ENCODE measurements at regions of chr19 and their contacts with region 1.

Region 1: GRCh38 chr19:4342615-4343369 is 570 bp upstream of the MPND start:
- DNase-seq: peak; percentile 96
- ATAC-seq: peak; percentile 93
- H3K4me3 Mint-ChIP-seq: peak overlapping the region; percentile 85
- H3K27ac Mint-ChIP-seq: peak overlapping the region; percentile 98
- H3K4me1 Mint-ChIP-seq: peaks cover 15% of the 10 kb centered on the region
- H3K27me3 Mint-ChIP-seq: peaks cover 12% of the 10 kb centered on the region
- CTCF ChIP-seq: no peak

Region 2: GRCh38 chr19:4246767-4247593 is 95.8 kb before region 1 on chr19 and contains the start of gene YJU2:
- CTCF ChIA-PET with region 1: interaction called, 6 read pairs
- POLR2A ChIA-PET with region 1: interaction called, 10 read pairs
- DNase-seq: peak; percentile 99
- ATAC-seq: peak; percentile 98
- H3K4me3 Mint-ChIP-seq: peak within 1 kb of the TSS; percentile 94
- H3K27ac Mint-ChIP-seq: peak within 1 kb of the TSS; percentile 100
- H3K4me1 Mint-ChIP-seq: 0 out of 2 replicates have a peak, but pooled peaks cover 3% of the 10 kb centered on the region
- H3K27me3 Mint-ChIP-seq: peaks cover 11% of the 10 kb centered on the region
- CTCF ChIP-seq: no peak; the same call in 1 of the 2 replicates
- total RNA-seq, gene YJU2: 24.3 to 26.5 TPM (median 25.2 TPM) in 3 replicates

Region 3: DNA sequence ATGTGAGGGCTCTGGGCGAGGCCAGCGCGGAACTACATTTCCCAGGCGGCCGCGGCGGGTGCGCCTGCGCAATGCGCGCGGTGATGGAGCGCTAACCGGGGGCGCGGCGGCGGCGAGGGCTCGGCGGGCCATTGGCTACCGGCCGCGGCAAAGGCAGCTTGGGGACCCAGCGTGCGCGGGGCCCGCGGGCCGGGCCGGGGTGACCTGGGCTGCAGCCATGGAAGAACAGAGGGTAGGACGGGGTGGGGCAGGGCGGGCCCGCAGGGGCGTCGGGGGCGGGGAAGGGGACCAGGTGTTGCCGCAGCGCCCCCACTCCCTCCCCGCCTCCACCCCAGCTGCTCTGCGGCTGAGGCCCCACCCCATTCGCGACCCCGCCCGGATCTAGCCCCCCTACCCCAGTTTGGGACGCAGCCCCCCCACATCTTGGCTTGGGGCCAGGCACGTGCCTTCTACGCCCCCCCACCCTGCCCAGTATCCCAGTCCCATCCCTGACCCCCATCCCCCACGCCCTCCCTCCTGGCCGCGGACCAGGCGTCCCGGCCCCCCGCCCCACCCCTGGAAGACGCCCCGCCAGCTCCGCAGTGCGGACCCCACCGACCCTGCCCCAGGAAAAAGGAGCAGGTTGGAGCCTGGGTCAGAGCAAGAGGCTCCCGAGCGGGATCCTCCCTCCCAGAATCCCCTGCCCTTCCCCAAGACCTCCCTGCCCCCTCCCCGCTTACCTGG is 38.1 kb before region 1 on chr19 and contains the start of gene FSD1:
- CTCF ChIA-PET with region 1: interaction called, 10 read pairs
- POLR2A ChIA-PET with region 1: interaction called, 7 read pairs
- DNase-seq: peak; percentile 87
- ATAC-seq: peak; percentile 93
- H3K4me3 Mint-ChIP-seq: peak within 1 kb of the TSS; percentile 67
- H3K27ac Mint-ChIP-seq: no peak within 1 kb of the TSS
- H3K4me1 Mint-ChIP-seq: peaks cover 17% of the 10 kb centered on the region
- H3K27me3 Mint-ChIP-seq: peaks cover 3% of the 10 kb centered on the region
- CTCF ChIP-seq: no peak
- total RNA-seq, gene FSD1: 61.3 to 69.2 TPM (median 65.7 TPM) in 3 replicates

Region 4: DNA sequence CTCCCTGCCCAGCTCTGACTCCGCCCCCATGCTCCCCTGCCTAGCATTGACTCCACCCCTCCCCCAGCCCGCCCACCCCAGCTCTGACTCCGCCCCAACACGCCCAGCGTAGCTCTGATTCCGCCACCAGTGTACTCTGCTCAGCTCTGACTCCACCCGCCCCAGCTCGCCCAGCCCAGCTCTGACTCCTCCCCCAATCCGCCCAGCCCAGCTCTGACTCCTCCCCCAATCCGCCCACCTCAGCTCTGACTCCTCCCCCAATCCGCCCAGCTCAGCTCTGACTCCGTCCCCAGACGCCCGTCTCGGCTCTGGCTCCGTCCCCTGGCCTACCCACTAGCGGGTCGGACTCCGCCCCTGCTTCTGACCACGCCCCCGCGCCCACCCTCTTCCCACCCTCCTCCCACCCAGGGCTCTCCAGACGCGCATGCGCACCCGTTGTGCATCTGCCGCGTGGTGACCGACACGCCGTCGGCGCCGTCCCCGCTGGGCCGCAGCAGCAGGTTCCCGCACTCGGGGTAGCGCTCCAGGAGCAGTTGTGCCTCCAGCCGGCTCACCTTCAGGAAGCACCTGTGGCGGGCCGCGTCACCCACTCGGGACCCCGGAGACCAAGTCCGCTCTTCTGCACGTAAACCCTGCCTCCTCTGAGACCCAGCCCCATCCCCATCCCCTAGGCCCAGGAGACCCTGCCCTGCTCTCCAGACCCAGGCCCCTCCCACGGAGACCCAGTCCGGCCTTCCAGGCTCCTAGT is 14.4 kb before region 1 on chr19:
- CTCF ChIA-PET with region 1: interaction called, 21 read pairs
- POLR2A ChIA-PET with region 1: interaction called, 17 read pairs
- DNase-seq: peak; percentile 98
- ATAC-seq: peak; percentile 68
- H3K4me3 Mint-ChIP-seq: peak overlapping the region; percentile 76
- H3K27ac Mint-ChIP-seq: no peak overlapping the region
- H3K4me1 Mint-ChIP-seq: peaks cover 12% of the 10 kb centered on the region
- H3K27me3 Mint-ChIP-seq: peaks cover 3% of the 10 kb centered on the region
- CTCF ChIP-seq: no peak

Region 5: GRCh38 chr19:4362861-4363510 is 20.2 kb after region 1 on chr19:
- CTCF ChIA-PET with region 1: interaction called, 17 read pairs
- POLR2A ChIA-PET with region 1: interaction called, 4 read pairs
- DNase-seq: peak; percentile 44
- ATAC-seq: peak; percentile 43
- H3K4me3 Mint-ChIP-seq: no peak overlapping the region
- H3K27ac Mint-ChIP-seq: no peak overlapping the region
- H3K4me1 Mint-ChIP-seq: peaks cover 10% of the 10 kb centered on the region
- H3K27me3 Mint-ChIP-seq: no peaks in the 10 kb centered on the region
- CTCF ChIP-seq: no peak

Region 6: DNA sequence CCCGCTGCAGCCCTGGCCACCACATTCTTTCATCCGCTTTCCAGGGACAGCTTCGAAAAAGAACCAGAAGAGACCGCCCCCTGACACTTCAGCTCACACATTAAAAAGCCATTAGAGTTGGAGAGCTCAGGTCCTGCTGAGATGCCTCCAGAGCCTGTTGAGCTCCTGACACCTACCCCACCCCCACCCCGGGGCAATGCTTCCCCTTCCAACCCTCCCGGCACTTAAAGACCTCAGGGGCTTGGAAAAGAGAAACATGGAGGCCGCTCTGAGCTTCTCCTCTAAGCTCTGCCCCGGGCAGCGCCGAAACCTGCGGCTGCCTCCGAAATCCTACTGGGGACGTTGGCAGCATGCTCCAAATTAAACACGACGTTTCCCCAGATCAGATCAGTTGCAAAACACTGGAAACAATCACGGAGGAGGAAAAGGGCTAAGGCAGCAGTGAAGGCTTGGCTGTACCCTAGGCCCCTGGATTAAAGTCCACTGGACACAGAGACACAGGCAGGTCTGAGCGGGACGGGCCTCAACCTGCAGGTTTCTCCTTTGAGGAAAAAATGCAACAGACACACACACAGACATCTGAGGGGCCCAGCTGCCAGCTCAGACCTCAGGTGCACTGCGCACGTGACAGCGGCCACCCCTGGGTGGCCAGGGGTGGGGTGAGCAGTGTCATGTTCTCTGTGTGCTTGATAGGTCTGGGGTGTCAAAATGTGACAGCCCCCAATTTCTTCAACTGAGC is 47.9 kb after region 1 on chr19:
- CTCF ChIA-PET with region 1: interaction called, 3 read pairs
- POLR2A ChIA-PET with region 1: interaction called, 12 read pairs
- DNase-seq: peak; percentile 56
- ATAC-seq: peak; percentile 83
- H3K4me3 Mint-ChIP-seq: peak overlapping the region; percentile 66
- H3K27ac Mint-ChIP-seq: peak overlapping the region; percentile 96
- H3K4me1 Mint-ChIP-seq: peaks cover 46% of the 10 kb centered on the region
- H3K27me3 Mint-ChIP-seq: no peaks in the 10 kb centered on the region; the same call in 1 of the 2 replicates
- CTCF ChIP-seq: no peak

Region 7: GRCh38 chr19:4400135-4400936 is 57.5 kb after region 1 on chr19 and contains the start of gene SH3GL1:
- CTCF ChIA-PET with region 1: interaction called, 19 read pairs
- POLR2A ChIA-PET with region 1: interaction called, 5 read pairs
- DNase-seq: peak; percentile 89
- ATAC-seq: peak; percentile 74
- H3K4me3 Mint-ChIP-seq: peak within 1 kb of the TSS; percentile 96
- H3K27ac Mint-ChIP-seq: peak within 1 kb of the TSS; percentile 97
- H3K4me1 Mint-ChIP-seq: peaks cover 38% of the 10 kb centered on the region
- H3K27me3 Mint-ChIP-seq: no peaks in the 10 kb centered on the region
- CTCF ChIP-seq: peak; percentile 92
- total RNA-seq, gene SH3GL1: 89.4 to 109 TPM (median 89.7 TPM) in 3 replicates

Measured in WTC11 (cell line).